ENCODE measurements at regions of chr6 and their contacts with region 1.

Region 1: GRCh38 chr6:138588805-138589434 is 89.6 kb upstream of the NHSL1 start:
- DNase-seq: peak in 4 of 5 donors; percentile 67 to 90 (median 73)
- H3K4me3 ChIP-seq: peak overlapping the region in 1 of 3 donors; percentile 6
- H3K27ac ChIP-seq: no peak overlapping the region
- H3K4me1 ChIP-seq: peaks cover 3 to 5% (median 4%) of the 10 kb centered on the region in 3 donors
- H3K27me3 ChIP-seq: no peaks in the 10 kb centered on the region
- CTCF ChIP-seq: peak; percentile 94

Region 2: GRCh38 chr6:138422861-138423260 is 166.1 kb before region 1 on chr6:
- intact Hi-C with region 1: no loop called
- DNase-seq: no peak
- H3K4me3 ChIP-seq: no peak overlapping the region
- H3K27ac ChIP-seq: no peak overlapping the region
- H3K4me1 ChIP-seq: peaks cover 0 to 3% (median 0%) of the 10 kb centered on the region in 3 donors
- H3K27me3 ChIP-seq: no peaks in the 10 kb centered on the region
- CTCF ChIP-seq: no peak

Region 3: DNA sequence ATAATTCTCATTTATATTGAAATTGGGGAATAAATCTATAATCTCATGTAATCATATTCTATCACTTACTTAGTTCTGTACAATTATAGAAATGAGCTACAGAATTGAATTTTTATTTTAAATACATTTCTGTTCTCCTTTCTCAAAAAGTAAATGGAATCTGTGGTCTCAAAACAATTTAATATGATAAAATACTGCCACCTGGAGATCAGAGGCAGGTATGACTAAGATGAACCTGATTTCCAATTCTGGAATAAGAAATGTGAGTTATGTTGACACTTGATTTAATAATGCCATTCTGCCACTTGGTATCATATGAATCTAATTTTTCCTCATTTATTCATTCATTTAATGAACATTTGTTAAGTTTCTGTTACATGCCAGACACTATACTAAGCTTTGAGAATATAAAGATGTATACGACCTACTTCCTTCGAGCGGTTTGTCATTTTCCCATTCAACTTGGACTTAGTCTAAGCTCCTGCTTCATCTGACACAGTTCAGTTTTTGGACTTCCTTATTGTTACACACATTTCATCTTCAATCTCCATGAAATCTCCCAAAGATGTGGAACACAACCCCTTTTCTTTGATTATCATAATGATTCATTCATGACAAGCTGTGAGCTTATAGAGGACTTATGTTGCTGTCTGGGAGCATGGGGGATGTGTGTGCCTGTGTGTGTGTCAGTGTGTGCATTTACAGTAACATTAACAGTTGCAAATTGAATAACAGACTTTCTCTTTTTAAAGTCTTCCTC is 177.2 kb after region 1 on chr6:
- intact Hi-C with region 1: loop called (anchors 5 kb)
- DNase-seq: peak in 2 of 5 donors; percentile 58 to 66
- H3K4me3 ChIP-seq: no peak overlapping the region
- H3K27ac ChIP-seq: no peak overlapping the region
- H3K4me1 ChIP-seq: no peaks in the 10 kb centered on the region
- H3K27me3 ChIP-seq: no peaks in the 10 kb centered on the region
- CTCF ChIP-seq: peak; percentile 57

Measured in kidney (tissue), 22 donors.